ENCODE measurements at regions of chr6 and their contacts with region 1.

Region 1: DNA sequence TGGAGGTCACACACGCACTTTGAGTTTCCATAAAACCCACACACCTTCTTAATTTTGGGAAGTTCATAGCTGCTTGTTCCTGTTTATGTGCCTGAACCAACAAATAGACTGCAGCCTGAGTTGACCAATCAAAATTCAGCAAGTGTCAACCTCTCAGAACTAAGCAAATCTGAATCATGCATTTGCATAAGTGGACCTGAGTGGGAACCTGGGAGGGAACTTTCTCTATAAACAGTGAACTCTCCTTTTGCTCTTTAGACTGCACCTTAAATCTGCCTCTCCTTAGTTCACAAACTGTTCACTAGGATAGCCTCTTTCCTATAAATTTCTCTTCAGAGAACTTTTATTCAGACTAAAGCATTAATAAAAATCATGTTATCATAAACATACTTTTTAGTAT is 37.9 kb downstream of the SLC17A1 start:
- DNase-seq: no peak

Region 2: DNA sequence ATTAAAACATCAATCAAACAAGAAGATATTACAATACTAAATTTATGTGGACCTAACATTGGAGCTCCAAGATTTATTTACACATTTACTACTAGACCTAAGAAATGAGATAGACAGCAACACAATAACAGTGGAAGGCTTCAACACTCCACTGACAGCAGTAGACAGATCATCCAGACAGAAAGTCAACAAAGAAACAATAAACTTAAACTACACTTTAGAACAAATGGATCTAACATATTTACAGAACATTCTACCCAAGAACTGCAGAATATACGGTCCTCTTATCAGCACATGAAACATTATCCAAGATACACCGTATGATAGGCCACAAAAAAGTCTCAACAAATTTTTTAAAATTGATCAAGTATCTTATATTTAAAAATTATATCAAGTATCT is 10.8 kb after region 1 on chr6:
- intact Hi-C with region 1: loop called in 1 of 2 experiments (anchors 1 kb)
- DNase-seq: no peak

Region 3: DNA sequence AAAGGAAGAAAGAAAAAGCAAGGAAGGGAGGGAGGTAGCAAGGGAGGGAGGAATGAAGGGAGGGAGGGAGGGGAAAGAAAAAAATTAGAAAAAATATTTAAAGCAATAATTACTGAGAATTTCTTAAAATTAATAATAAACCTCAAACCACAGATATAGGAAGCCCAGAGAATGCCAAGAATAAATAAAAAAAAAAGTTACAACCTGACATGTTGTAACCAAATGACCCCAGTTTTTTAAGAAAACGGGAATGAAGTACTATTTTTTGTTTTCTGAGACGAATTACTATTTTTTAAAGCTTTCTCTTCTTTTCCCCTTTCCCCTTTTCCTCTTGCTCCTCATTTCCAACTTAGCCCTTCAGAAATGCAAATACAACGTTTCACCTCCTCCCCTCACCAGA is 21.2 kb after region 1 on chr6:
- intact Hi-C with region 1: loop called in 1 of 2 experiments (anchors 1 kb)
- DNase-seq: no peak

Measured in posterior vena cava (tissue), 2 donors.